Activated T-helper 2 cell treated with anti-CD3 and anti-CD28 coated beads, Interferon-gamma antibody, Interleukin-2, Interleukin-4, amounts not matched to agents 10 μg/mL and 5 μg/mL and 100 μg/mL, durations not matched to agents 14 hours and 24 hours and 36 hours (primary cell): ENCODE measurements at regions of chr10 and their contacts with region 1.

Region 1: GRCh38 chr10:119253433-119254174 is 46.2 kb downstream of the GRK5 start:
- DNase-seq: no peak
- H3K4me3 Mint-ChIP-seq: no peak overlapping the region
- H3K27ac Mint-ChIP-seq: peak overlapping the region; percentile 89
- H3K4me1 Mint-ChIP-seq: peaks cover 33% of the 10 kb centered on the region
- H3K27me3 Mint-ChIP-seq: no peaks in the 10 kb centered on the region

Region 2: DNA sequence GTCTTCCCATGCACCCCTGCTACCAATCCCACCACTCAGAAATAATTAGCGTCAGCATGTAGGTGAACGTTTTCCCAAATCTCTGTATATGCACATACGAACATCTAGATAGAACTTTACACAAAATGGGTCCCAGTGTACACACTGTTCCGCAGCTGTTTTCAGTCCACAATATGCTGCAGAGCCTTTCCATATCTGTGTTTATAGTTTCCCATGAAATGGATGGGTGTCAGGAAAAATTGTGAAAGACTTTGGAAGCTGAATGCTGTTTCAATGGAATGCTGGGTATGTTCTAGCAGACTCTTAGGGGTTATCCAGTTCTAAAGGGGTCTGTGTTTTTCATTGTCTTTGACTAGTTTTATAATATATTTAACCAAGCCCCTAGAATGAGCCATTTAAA is 32.4 kb before region 1 on chr10:
- intact Hi-C with region 1: loop called (anchors 2 kb)
- DNase-seq: no peak
- H3K4me3 Mint-ChIP-seq: no peak overlapping the region
- H3K27ac Mint-ChIP-seq: no peak overlapping the region
- H3K4me1 Mint-ChIP-seq: peaks cover 32% of the 10 kb centered on the region
- H3K27me3 Mint-ChIP-seq: no peaks in the 10 kb centered on the region

Region 3: DNA sequence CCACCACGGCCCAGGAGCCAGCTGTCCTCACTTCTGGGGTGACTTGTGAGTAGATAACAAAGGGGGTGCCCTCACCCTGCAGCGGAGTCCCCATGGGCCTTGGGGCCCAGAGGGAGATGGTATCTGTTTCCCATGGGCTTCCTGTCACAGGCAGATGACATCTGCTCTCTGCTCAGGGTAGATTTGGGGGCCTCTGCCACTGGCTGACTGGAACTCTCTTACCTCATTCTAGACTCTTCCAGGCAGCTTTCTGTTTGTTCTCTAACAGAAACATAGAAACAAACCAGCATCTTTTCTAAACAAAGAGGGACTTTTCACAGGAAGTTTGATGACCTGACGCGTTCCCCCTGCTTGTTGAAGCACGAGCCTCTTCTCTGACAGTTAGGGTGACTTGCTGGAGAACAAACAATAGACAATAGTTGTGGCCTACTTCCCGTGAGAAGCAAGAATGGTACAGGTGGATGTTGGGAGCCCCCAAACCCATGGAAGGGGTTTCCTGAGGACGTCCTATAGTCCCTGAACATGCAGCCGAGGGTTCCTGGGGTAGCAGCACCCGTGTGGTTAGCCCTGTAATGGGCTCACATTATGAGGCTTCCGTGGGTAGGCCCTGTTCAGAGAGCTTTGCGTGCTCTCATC is 15.4 kb after region 1 on chr10:
- intact Hi-C with region 1: loop called (anchors 1 kb)
- DNase-seq: peak; percentile 77
- H3K4me3 Mint-ChIP-seq: peak overlapping the region; percentile 53
- H3K27ac Mint-ChIP-seq: peak overlapping the region; percentile 99
- H3K4me1 Mint-ChIP-seq: peaks cover 47% of the 10 kb centered on the region
- H3K27me3 Mint-ChIP-seq: no peaks in the 10 kb centered on the region